ENCODE measurements at regions of chr6 and their contacts with region 1.

Region 1: DNA sequence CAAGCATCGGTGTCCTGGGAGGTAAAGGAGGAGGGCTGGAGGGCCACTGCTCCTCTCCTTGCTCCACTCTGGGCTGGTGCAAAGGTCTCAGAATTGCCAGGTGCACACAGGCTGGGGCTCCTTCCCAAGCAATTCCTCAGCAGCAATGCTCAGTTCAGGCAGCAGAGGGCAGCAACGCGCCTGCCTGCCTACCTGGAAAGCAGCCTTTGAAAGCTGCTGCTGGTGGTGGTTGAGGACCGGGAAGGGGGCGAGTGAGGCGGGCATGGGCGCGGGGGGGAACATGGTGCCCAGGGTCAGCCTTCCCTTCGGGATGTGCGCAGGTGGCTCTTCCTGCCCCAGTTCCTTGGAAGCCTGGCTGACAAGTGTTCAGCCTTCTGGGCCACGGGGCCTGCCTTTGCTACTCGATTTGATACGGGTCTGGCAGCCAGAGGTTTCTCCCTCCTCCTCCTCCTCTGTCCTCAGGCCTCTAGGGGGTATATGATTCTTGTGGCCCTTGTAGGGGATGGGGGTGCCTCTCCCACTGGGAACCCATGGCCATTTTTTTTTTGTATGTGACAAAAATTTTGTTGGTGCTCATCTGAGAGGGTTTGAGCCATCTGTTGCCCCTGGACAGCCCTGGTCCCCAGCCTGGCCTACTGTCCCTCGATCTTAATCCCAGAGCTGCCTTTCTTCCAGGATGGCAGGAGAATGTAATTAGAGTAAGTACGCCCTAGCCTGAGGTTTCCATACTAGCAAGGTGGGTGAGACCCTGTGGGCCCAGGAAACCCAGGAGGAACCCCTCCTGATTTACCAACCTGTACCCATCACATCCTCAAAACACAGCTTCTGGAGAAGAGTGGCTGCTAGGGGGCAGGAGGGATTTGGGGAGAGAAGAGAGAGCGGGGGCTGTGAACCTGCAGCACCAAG is 20.1 kb downstream of the MRPS18A start:
- DNase-seq: peak; percentile 62 to 85
- ATAC-seq: peak; percentile 67 to 69
- H3K4me3 ChIP-seq: peak overlapping the region in 3 of 4 donors; percentile 17 to 30 (median 18)
- H3K27ac ChIP-seq: peak overlapping the region; percentile 95 to 97 (median 96)
- H3K4me1 ChIP-seq: peaks cover 54 to 59% of the 10 kb centered on the region in 2 donors
- H3K27me3 ChIP-seq: no peaks in the 10 kb centered on the region
- CTCF ChIP-seq: peak; percentile 98
- POLR2A ChIP-seq: peak in 1 of 2 donors; percentile 34

Region 2: GRCh38 chr6:43702534-43703440 is 35.3 kb after region 1 on chr6:
- in situ Hi-C with region 1: no loop called
- intact Hi-C with region 1: loop called (anchors 2 kb)
- DNase-seq: peak; percentile 80 to 88
- ATAC-seq: peak; percentile 68 to 74
- H3K4me3 ChIP-seq: no peak overlapping the region
- H3K27ac ChIP-seq: peak overlapping the region; percentile 79 to 84 (median 82)
- H3K4me1 ChIP-seq: peaks cover 37 to 55% of the 10 kb centered on the region in 2 donors
- H3K27me3 ChIP-seq: no peaks in the 10 kb centered on the region
- CTCF ChIP-seq: no peak
- POLR2A ChIP-seq: peak; percentile 46 to 67

Region 3: DNA sequence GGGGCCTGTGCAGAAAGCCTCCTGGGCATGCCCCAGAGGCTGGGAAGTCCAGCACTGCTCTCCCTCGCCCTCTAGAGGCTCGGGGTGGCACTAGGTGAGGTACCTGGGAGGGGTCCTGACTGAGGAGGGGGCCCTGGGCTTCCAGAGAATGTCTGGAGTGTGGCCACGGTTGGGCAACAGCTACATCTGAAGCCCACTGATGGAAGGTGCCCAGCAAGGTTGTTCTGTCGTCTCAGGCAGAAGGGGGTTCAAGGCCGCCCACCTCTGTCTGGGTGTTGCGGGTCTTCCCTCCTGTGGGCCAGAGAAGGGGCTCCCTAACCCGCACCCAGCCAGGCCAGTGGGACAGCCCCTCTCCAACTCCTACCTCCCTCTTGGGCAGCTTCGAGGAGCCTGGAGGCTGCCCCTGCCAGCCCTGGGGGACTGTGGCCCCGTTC is 91.1 kb after region 1 on chr6:
- in situ Hi-C with region 1: loop called (anchors 5 to 10 kb)
- intact Hi-C with region 1: loop called (anchors 1 kb)
- DNase-seq: no peak
- ATAC-seq: peak; percentile 62 to 72
- H3K4me3 ChIP-seq: no peak overlapping the region
- H3K27ac ChIP-seq: no peak overlapping the region
- H3K4me1 ChIP-seq: no peaks in the 10 kb centered on the region
- H3K27me3 ChIP-seq: no peaks in the 10 kb centered on the region
- CTCF ChIP-seq: peak; percentile 76 to 90 (median 82)
- POLR2A ChIP-seq: no peak

Region 4: DNA sequence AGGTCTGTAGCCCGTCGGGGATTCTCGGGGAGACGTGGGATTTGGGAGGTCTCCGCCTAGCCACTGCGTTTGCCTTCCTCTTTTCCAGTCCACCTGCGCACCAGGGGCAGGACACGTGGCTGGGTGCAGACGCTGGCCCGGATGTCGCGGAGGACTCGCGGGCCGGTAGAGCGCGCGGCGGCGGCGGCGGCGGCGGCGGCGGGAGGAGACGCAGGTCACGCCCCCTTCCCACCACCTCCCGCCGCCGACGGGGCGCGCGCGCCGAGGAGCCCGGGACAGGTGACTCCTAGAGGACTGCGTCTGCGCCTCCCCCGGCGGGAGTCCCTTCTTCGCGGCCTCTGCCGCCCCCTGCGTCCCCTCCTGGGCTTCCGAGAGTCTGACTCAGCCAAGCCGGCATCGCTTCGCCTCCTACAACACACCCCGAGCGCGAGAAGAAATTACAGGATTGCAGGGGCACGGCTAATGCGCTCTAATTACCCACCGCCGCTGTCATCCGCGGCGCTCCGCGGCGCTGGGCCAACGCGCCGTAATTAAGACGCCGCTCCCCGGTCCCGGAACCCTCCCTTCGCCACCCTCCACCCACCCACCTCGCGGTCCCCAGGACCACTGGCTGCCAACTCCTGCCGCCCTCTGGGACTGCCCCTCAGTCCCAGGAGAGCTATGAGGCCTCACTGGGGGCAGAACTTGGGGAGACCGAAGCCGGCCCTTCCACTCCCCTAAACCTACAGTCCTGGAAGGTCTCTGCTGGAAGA is 335.3 kb after region 1 on chr6:
- in situ Hi-C with region 1: no loop called
- intact Hi-C with region 1: loop called (anchors 5 kb)
- DNase-seq: peak; percentile 39 to 78
- ATAC-seq: peak; percentile 22 to 36
- H3K4me3 ChIP-seq: peak overlapping the region; percentile 36 to 49 (median 44)
- H3K27ac ChIP-seq: peak overlapping the region; percentile 83 to 93 (median 88)
- H3K4me1 ChIP-seq: peaks cover 36 to 45% of the 10 kb centered on the region in 2 donors
- H3K27me3 ChIP-seq: no peaks in the 10 kb centered on the region
- CTCF ChIP-seq: peak in 4 of 5 experiments; percentile 8 to 36 (median 29)
- POLR2A ChIP-seq: peak; percentile 63 to 70

Measured in gastrocnemius medialis (tissue), 4 donors.